Natural killer cell (primary cell): ENCODE measurements at regions of chr6 and their contacts with region 1.

Region 1: GRCh38 chr6:41066867-41067304 is 5.3 kb downstream of the OARD1 start:
- DNase-seq: peak; percentile 59 to 88
- ATAC-seq: peak in 1 of 3 donors; percentile 18
- H3K4me3 ChIP-seq: no peak overlapping the region
- H3K4me3 Mint-ChIP-seq: no peak overlapping the region
- H3K27ac ChIP-seq: no peak overlapping the region
- H3K27ac Mint-ChIP-seq: peak overlapping the region; percentile 10 to 64
- H3K4me1 ChIP-seq: peaks cover 5% of the 10 kb centered on the region
- H3K4me1 Mint-ChIP-seq: peaks cover 24 to 27% of the 10 kb centered on the region in 2 donors
- H3K27me3 ChIP-seq: no peaks in the 10 kb centered on the region
- H3K27me3 Mint-ChIP-seq: no peaks in the 10 kb centered on the region
- CTCF ChIP-seq: peak; percentile 97

Region 2: DNA sequence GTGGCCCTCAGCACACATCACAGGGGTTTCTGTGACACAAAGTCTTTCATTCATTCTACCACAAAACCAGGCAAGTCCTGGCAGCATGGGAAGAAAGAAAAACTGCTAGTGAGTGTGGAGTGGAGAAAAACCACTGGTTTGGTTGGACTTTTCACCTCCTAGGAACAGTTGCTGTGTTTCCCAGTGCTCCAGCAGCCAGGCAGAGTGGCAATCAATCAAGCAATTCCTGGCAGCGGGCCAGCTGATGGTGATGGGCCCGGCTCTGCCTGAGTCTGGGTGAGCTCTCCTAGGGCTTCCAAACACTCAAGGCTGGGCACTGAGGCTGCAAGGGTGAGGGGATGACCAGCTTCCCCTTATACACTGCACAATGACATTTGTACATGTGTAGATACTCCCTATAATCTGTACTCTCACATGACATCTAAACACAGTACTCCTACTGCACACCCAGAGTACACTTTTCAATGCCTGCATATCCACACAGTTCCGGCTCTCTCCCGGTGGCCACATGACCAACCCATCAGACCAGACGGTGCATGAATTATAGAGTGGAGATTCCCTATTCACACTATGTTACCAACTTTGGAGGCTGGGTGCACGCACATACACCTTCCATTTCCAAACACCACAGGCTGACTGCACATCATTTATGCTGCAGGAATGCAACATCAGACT is 184.4 kb before region 1 on chr6:
- intact Hi-C with region 1: no loop called
- DNase-seq: no peak
- ATAC-seq: no peak
- H3K4me3 ChIP-seq: no peak overlapping the region
- H3K4me3 Mint-ChIP-seq: no peak overlapping the region
- H3K27ac ChIP-seq: no peak overlapping the region
- H3K27ac Mint-ChIP-seq: no peak overlapping the region
- H3K4me1 ChIP-seq: no peaks in the 10 kb centered on the region
- H3K4me1 Mint-ChIP-seq: peaks cover 0 to 6% of the 10 kb centered on the region in 2 donors
- H3K27me3 ChIP-seq: no peaks in the 10 kb centered on the region
- H3K27me3 Mint-ChIP-seq: peaks cover 14 to 24% of the 10 kb centered on the region in 2 donors
- CTCF ChIP-seq: no peak

Region 3: DNA sequence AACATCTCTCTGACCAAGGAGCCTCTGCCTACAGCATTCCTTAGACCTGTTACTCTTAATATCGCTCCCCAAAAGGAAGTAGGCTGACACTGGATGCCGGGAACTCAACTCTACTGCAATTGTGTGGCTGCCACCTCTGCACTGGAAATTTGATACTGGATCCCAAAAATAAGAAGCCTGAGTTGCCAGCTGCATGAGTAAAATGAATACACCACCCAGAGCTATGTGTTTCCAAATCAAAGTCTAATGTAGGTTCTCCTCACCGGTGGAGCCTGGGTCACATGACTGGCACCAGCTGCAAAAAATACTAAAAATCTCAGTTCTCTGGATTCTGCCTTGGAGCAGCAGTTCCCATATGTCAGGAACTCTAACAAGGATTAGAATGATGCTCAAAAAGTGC is 64.7 kb before region 1 on chr6:
- intact Hi-C with region 1: loop called (anchors 1 kb)
- DNase-seq: no peak
- ATAC-seq: no peak
- H3K4me3 ChIP-seq: no peak overlapping the region
- H3K4me3 Mint-ChIP-seq: no peak overlapping the region
- H3K27ac ChIP-seq: no peak overlapping the region
- H3K27ac Mint-ChIP-seq: no peak overlapping the region
- H3K4me1 ChIP-seq: no peaks in the 10 kb centered on the region
- H3K4me1 Mint-ChIP-seq: no peaks in the 10 kb centered on the region
- H3K27me3 ChIP-seq: no peaks in the 10 kb centered on the region
- H3K27me3 Mint-ChIP-seq: peaks cover 24 to 77% of the 10 kb centered on the region in 2 donors
- CTCF ChIP-seq: no peak

Region 4: DNA sequence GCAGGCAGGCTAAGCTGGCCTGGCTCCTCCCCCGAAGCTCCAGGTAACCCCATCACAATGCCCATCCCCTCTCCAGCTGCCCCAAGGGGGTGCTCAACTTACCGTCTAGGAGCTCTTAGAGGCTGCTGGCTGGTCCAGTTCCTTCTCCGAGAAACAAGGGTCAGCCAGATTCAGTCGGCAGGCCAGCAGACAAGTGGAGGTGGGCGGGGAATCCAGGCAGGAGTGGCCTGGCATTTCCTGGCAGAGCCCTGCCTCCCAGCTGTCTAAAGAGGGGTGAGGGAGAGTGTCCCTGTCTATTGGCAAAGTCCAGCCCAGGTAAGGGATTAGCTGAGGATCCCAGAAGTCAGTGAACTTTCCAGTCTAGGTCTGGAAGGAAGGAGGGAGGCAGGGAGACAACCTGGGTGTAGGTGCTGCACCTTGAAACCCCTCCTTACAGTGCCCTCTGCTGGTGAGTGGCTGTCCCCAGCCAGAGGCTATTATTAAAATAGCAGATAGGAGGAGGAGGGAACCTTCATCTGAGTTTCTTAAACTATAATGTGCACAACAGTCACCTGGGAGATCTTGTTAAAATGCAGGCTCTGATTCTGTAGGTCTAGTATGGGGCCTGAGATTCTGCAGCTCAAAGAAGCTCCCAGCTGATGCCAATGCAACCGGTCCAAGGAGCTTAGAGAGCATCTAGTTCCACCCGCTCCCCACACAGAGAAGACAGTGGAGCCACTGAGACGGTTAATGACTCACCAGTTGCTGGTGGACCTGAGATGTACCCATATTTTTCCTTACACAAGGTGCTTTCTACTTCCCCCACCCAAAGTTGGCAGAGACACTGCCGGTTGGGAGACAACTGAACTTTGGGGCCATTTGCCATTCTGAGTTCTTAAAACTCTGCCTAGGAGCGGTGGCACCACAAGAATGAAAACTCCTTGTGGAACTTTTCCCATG is 27.6 kb before region 1 on chr6 and contains the start of gene UNC5CL:
- intact Hi-C with region 1: no loop called
- DNase-seq: peak in 1 of 2 donors; percentile 71
- ATAC-seq: peak in 2 of 3 donors; percentile 67 to 75
- H3K4me3 ChIP-seq: no peak within 1 kb of the TSS
- H3K4me3 Mint-ChIP-seq: no peak within 1 kb of the TSS
- H3K27ac ChIP-seq: no peak within 1 kb of the TSS
- H3K27ac Mint-ChIP-seq: no peak within 1 kb of the TSS
- H3K4me1 ChIP-seq: no peaks in the 10 kb centered on the region
- H3K4me1 Mint-ChIP-seq: no peaks in the 10 kb centered on the region
- H3K27me3 ChIP-seq: no peaks in the 10 kb centered on the region
- H3K27me3 Mint-ChIP-seq: no peaks in the 10 kb centered on the region
- CTCF ChIP-seq: peak; percentile 71
- total RNA-seq, gene UNC5CL: 2.1 to 5.3 (median 4.4) TPM